ENCODE measurements at regions of chr7 and their contacts with region 1.

Region 1: GRCh38 chr7:21898265-21898930 is 47.3 kb downstream of the CDCA7L start:
- DNase-seq: no peak
- H3K4me3 ChIP-seq: no peak overlapping the region
- H3K27ac ChIP-seq: no peak overlapping the region
- H3K4me1 ChIP-seq: peaks cover 0 to 4% (median 0%) of the 10 kb centered on the region in 4 donors
- H3K27me3 ChIP-seq: no peaks in the 10 kb centered on the region
- CTCF ChIP-seq: no peak
- EP300 ChIP-seq: no peak
- POLR2A ChIP-seq: no peak

Region 2: GRCh38 chr7:21966271-21966670 is 67.9 kb after region 1 on chr7:
- intact Hi-C with region 1: loop called (anchors 5 kb)
- DNase-seq: no peak
- H3K4me3 ChIP-seq: no peak overlapping the region
- H3K27ac ChIP-seq: no peak overlapping the region
- H3K4me1 ChIP-seq: no peaks in the 10 kb centered on the region
- H3K27me3 ChIP-seq: no peaks in the 10 kb centered on the region
- CTCF ChIP-seq: no peak
- EP300 ChIP-seq: no peak
- POLR2A ChIP-seq: no peak

Region 3: GRCh38 chr7:22001345-22002004 is 103.1 kb after region 1 on chr7:
- intact Hi-C with region 1: loop called (anchors 10 kb)
- DNase-seq: peak; percentile 12
- H3K4me3 ChIP-seq: no peak overlapping the region
- H3K27ac ChIP-seq: peak overlapping the region in 2 of 4 donors; percentile 41 to 57
- H3K4me1 ChIP-seq: peaks cover 0 to 33% (median 18%) of the 10 kb centered on the region in 4 donors
- H3K27me3 ChIP-seq: no peaks in the 10 kb centered on the region
- CTCF ChIP-seq: peak; percentile 83 to 87 (median 86)
- EP300 ChIP-seq: no peak
- POLR2A ChIP-seq: no peak

Region 4: GRCh38 chr7:22074897-22075296 is 176.5 kb after region 1 on chr7:
- intact Hi-C with region 1: no loop called
- DNase-seq: no peak
- H3K4me3 ChIP-seq: no peak overlapping the region
- H3K27ac ChIP-seq: no peak overlapping the region
- H3K4me1 ChIP-seq: peaks cover 0 to 9% (median 0%) of the 10 kb centered on the region in 4 donors
- H3K27me3 ChIP-seq: no peaks in the 10 kb centered on the region
- CTCF ChIP-seq: no peak
- EP300 ChIP-seq: no peak
- POLR2A ChIP-seq: no peak

Region 5: GRCh38 chr7:22219036-22219435 is 320.6 kb after region 1 on chr7:
- intact Hi-C with region 1: no loop called
- DNase-seq: no peak
- H3K4me3 ChIP-seq: peak overlapping the region; percentile 32 to 48 (median 41)
- H3K27ac ChIP-seq: peak overlapping the region; percentile 62 to 67 (median 64)
- H3K4me1 ChIP-seq: peaks cover 0 to 13% (median 6%) of the 10 kb centered on the region in 4 donors
- H3K27me3 ChIP-seq: no peaks in the 10 kb centered on the region
- CTCF ChIP-seq: no peak
- EP300 ChIP-seq: no peak
- POLR2A ChIP-seq: no peak